Panc1 (cell line): ENCODE measurements at regions of chr10 and their contacts with region 1.

Region 1: DNA sequence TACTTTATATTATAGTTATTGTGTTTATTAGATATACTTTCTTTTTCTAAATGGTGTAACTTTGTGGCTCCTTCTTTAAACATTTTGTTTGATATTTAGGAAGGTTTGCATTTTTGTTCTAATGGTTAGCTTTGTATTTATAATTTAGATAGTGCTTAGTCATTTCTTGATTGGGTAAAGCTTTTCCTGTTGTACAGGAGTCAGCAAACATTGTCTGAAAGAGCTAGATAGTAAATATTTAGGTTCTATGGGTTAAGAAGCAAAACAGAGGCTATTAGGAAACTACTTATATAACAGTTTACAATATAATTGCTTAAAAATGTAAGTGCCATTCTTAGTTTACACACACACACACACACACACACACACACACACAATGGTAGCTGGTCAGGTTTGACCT is 70.6 kb upstream of the CCDC6 start:
- DNase-seq: no peak
- ATAC-seq: no peak
- H3K4me3 ChIP-seq: no peak overlapping the region
- H3K27ac ChIP-seq: no peak overlapping the region
- H3K4me1 ChIP-seq: no peaks in the 10 kb centered on the region
- H3K27me3 ChIP-seq: no peaks in the 10 kb centered on the region
- CTCF ChIP-seq: no peak

Region 2: GRCh38 chr10:59906417-59907202 is 70.3 kb before region 1 on chr10 and contains the start of gene CCDC6:
- CTCF ChIA-PET with region 1: interaction called, 3 read pairs
- POLR2A ChIA-PET with region 1: no interaction called
- in situ Hi-C with region 1: no loop called
- intact Hi-C with region 1: loop called (anchors 2 kb)
- DNase-seq: peak; percentile 71
- ATAC-seq: peak; percentile 95
- H3K4me3 ChIP-seq: peak within 1 kb of the TSS; percentile 91 to 98
- H3K27ac ChIP-seq: peak within 1 kb of the TSS; percentile 98
- H3K4me1 ChIP-seq: peaks cover 35% of the 10 kb centered on the region
- H3K27me3 ChIP-seq: no peaks in the 10 kb centered on the region
- CTCF ChIP-seq: peak; percentile 96
- total RNA-seq, gene CCDC6: 48.7 TPM

Region 3: GRCh38 chr10:59934701-59935100 is 42.2 kb before region 1 on chr10:
- CTCF ChIA-PET with region 1: no interaction called
- POLR2A ChIA-PET with region 1: no interaction called
- in situ Hi-C with region 1: no loop called
- intact Hi-C with region 1: no loop called
- DNase-seq: no peak
- ATAC-seq: no peak
- H3K4me3 ChIP-seq: no peak overlapping the region
- H3K27ac ChIP-seq: no peak overlapping the region
- H3K4me1 ChIP-seq: no peaks in the 10 kb centered on the region
- H3K27me3 ChIP-seq: peaks cover 6% of the 10 kb centered on the region; the same call in 1 of the 2 replicates
- CTCF ChIP-seq: no peak